IMR-90 (cell line): ENCODE measurements at regions of chr2 and their contacts with region 1.

Region 1: GRCh38 chr2:195930082-195930481 is 138.6 kb downstream of the DNAH7 start:
- DNase-seq: no peak
- ATAC-seq: no peak
- H3K4me3 ChIP-seq: no peak overlapping the region
- H3K27ac ChIP-seq: no peak overlapping the region
- H3K4me1 ChIP-seq: no peaks in the 10 kb centered on the region
- H3K27me3 ChIP-seq: no peaks in the 10 kb centered on the region
- CTCF ChIP-seq: no peak
- POLR2A ChIP-seq: no peak
- RAD21 ChIP-seq: no peak

Region 2: DNA sequence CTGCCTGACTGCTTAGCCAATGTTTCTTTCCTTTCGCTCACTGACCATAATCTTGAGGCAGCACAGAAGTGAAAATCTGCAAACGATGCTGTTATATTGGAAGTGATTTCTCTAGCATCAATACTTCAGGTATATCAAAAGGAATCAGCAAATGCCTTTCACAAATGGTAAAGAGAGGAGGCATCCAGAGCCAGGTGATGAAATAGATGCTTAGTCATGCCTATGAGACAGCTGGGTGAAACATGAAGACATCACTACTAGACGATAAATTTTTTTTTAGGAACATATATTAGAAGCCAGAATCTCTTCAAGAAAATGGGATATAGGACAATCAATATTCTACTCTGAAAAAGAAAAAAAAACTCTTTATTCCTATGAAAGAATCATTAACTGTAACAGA is 522.3 kb before region 1 on chr2:
- CTCF ChIA-PET with region 1: no interaction called
- POLR2A ChIA-PET with region 1: no interaction called
- dilution Hi-C with region 1: no loop called
- in situ Hi-C with region 1: no loop called
- intact Hi-C with region 1: loop called (anchors 10 kb)
- DNase-seq: peak; percentile 66
- ATAC-seq: no peak
- H3K4me3 ChIP-seq: no peak overlapping the region
- H3K27ac ChIP-seq: no peak overlapping the region
- H3K4me1 ChIP-seq: peaks cover 6% of the 10 kb centered on the region
- H3K27me3 ChIP-seq: no peaks in the 10 kb centered on the region
- CTCF ChIP-seq: no peak
- POLR2A ChIP-seq: no peak
- RAD21 ChIP-seq: no peak

Region 3: DNA sequence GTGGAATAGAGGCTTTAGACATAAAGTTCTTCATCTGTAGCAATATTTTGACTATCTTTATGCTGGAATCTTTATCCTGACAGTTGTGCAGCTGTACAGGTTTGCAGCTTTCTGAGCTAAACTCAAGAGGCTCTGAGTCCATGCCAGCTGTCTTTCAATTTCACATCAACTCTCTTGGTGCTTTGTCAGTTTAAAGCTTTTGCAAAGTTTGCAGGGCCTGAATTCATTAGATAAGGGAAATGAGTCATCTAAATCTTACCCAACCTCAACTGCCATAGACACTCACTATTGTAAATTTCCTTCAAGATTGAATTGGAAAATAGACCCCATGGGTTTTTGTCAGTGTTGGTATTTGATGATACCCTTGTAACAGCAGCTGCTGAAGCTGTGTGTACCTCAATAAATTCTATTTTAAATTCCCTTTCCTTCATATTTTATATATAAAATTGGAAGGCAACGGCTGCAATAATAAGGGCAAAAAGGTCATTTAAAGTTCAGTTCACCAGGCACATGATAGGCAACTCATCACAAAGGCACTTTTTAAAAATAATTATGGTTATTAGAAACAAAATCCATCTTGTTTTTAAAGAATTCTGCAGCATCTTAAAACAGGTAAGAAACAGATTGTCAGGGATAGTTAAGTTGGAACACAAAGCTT is 443.0 kb before region 1 on chr2:
- CTCF ChIA-PET with region 1: no interaction called
- POLR2A ChIA-PET with region 1: no interaction called
- dilution Hi-C with region 1: no loop called
- in situ Hi-C with region 1: no loop called
- intact Hi-C with region 1: loop called (anchors 10 kb)
- DNase-seq: peak; percentile 81
- ATAC-seq: peak; percentile 80
- H3K4me3 ChIP-seq: no peak overlapping the region
- H3K27ac ChIP-seq: no peak overlapping the region
- H3K4me1 ChIP-seq: no peaks in the 10 kb centered on the region; the same call in 1 of the 2 replicates
- H3K27me3 ChIP-seq: no peaks in the 10 kb centered on the region
- CTCF ChIP-seq: no peak
- POLR2A ChIP-seq: no peak
- RAD21 ChIP-seq: no peak

Region 4: DNA sequence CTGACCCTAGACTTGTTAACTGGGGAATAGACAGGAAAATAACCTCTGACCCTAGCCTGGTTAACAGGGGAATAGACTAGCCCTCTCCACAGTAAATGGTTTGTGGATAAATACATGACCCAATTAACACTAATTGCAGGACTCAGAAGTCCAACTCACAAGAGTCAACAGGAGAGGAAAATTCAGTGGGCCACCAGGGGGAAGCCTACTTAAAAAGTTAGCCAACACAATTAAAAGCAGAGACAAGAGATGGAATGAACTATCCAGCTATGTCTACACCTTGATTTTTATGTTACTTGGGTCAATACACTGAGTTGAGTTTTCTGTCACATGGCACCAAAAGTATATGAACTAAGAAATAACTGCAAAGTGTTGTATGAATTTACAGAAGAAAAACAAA is 431.9 kb before region 1 on chr2:
- CTCF ChIA-PET with region 1: no interaction called
- POLR2A ChIA-PET with region 1: no interaction called
- dilution Hi-C with region 1: no loop called
- in situ Hi-C with region 1: no loop called
- intact Hi-C with region 1: no loop called
- DNase-seq: peak; percentile 30
- ATAC-seq: no peak
- H3K4me3 ChIP-seq: no peak overlapping the region
- H3K27ac ChIP-seq: no peak overlapping the region
- H3K4me1 ChIP-seq: 0 out of 2 replicates have a peak, but pooled peaks cover 2% of the 10 kb centered on the region
- H3K27me3 ChIP-seq: no peaks in the 10 kb centered on the region
- CTCF ChIP-seq: 0 out of 2 replicates have a peak, but pooled peaks have one; percentile 29
- POLR2A ChIP-seq: no peak
- RAD21 ChIP-seq: peak; percentile 32; the same call in 1 of the 2 replicates

Region 5: GRCh38 chr2:195533771-195534642 is 396.1 kb before region 1 on chr2:
- CTCF ChIA-PET with region 1: no interaction called
- POLR2A ChIA-PET with region 1: no interaction called
- dilution Hi-C with region 1: no loop called
- in situ Hi-C with region 1: no loop called
- intact Hi-C with region 1: loop called (anchors 10 kb)
- DNase-seq: peak; percentile 94
- ATAC-seq: peak; percentile 84
- H3K4me3 ChIP-seq: no peak overlapping the region
- H3K27ac ChIP-seq: peak overlapping the region; percentile 65
- H3K4me1 ChIP-seq: peaks cover 11% of the 10 kb centered on the region
- H3K27me3 ChIP-seq: no peaks in the 10 kb centered on the region
- CTCF ChIP-seq: peak; percentile 37
- POLR2A ChIP-seq: no peak
- RAD21 ChIP-seq: peak; percentile 27; the same call in 1 of the 2 replicates